Activated B cell treated with CpG ODN at 0.5 μM for 24 hours (primary cell): ENCODE measurements at regions of chr10 and their contacts with region 1.

Region 1: GRCh38 chr10:59839588-59839987 is 66.8 kb downstream of the CCDC6 start:
- DNase-seq: no peak
- ATAC-seq: no peak
- H3K4me3 Mint-ChIP-seq: no peak overlapping the region
- H3K27ac Mint-ChIP-seq: no peak overlapping the region
- H3K4me1 Mint-ChIP-seq: peaks cover 52% of the 10 kb centered on the region
- H3K27me3 Mint-ChIP-seq: no peaks in the 10 kb centered on the region
- CTCF ChIP-seq: no peak

Region 2: DNA sequence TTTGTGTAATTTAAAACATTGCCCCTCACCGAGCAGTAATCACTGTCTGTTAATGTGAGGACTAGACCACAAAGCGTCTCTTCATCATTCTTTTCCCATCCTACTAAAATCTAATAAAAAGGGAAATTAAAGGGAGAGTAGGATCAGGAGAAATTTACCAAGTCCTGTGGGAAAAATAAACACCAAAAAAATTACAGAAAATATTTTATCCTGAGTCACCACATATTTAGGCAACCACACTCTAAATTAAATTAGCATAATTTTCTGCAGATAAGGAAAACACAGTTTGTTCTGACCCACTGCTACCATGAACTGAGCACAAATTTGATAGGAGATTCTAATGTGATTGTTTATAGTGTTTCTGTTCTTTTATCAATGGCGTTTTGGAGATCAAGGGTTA is 17.5 kb after region 1 on chr10:
- CTCF ChIA-PET with region 1: no interaction called
- POLR2A ChIA-PET with region 1: no interaction called
- intact Hi-C with region 1: no loop called
- DNase-seq: no peak
- ATAC-seq: no peak
- H3K4me3 Mint-ChIP-seq: no peak overlapping the region
- H3K27ac Mint-ChIP-seq: no peak overlapping the region
- H3K4me1 Mint-ChIP-seq: peaks cover 80% of the 10 kb centered on the region
- H3K27me3 Mint-ChIP-seq: no peaks in the 10 kb centered on the region
- CTCF ChIP-seq: no peak

Region 3: DNA sequence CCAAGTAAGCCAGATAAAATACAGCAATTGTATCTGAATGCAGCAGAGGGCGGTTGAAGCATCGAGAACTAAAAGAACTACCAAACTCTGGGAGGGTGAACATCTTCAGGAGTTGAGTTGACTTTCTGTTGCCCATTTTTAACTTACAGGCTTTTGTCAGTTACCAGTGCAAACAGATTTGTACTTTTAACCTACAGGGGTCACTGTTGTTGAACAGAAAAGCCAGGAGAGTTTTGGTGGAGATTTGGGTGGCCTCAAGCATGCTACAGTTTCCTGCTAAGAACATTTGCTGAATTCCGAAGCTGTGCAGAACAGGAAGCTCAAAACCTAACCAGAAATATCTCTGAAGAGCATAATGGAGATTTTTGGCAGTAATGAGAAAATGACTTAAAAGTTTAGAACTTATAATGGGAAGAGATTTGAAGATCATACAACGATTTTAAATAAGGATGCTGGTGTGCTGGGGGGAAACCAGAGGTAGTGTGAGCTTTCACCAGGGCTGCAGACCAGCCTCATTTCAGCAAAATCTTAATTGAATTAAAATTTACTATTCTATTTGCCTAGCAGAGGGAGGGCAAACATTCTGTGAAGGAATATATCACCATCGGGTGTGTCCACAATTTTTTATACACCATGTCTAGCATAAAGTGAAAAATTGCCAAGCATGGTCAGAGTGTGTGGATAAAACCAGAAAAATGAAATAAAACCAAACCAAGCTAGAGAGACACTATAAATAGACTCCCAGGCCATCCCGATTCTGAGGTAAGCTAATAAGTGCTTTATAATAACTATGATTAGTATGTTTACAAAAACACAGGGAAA is 275.4 kb after region 1 on chr10:
- CTCF ChIA-PET with region 1: no interaction called
- POLR2A ChIA-PET with region 1: interaction called, 13 read pairs
- intact Hi-C with region 1: no loop called
- DNase-seq: no peak
- ATAC-seq: peak; percentile 64
- H3K4me3 Mint-ChIP-seq: no peak overlapping the region
- H3K27ac Mint-ChIP-seq: no peak overlapping the region
- H3K4me1 Mint-ChIP-seq: no peaks in the 10 kb centered on the region
- H3K27me3 Mint-ChIP-seq: no peaks in the 10 kb centered on the region
- CTCF ChIP-seq: no peak